Calu3 (cell line): ENCODE measurements at regions of chr9 and their contacts with region 1.

Region 1: GRCh38 chr9:129482521-129483414 is 138.1 kb downstream of the C9orf50 start:
- DNase-seq: peak; percentile 78
- H3K4me3 Mint-ChIP-seq: peak overlapping the region; percentile 57
- H3K27ac Mint-ChIP-seq: peak overlapping the region; percentile 98
- H3K4me1 Mint-ChIP-seq: peaks cover 62% of the 10 kb centered on the region
- H3K27me3 Mint-ChIP-seq: no peaks in the 10 kb centered on the region
- CTCF ChIP-seq: no peak

Region 2: GRCh38 chr9:129413537-129414376 is 69.0 kb before region 1 on chr9:
- CTCF ChIA-PET with region 1: interaction called, 4 read pairs
- intact Hi-C with region 1: loop called (anchors 10 kb)
- DNase-seq: peak; percentile 98
- H3K4me3 Mint-ChIP-seq: peak overlapping the region; percentile 55
- H3K27ac Mint-ChIP-seq: peak overlapping the region; percentile 92
- H3K4me1 Mint-ChIP-seq: peaks cover 22% of the 10 kb centered on the region
- H3K27me3 Mint-ChIP-seq: no peaks in the 10 kb centered on the region
- CTCF ChIP-seq: no peak

Region 3: GRCh38 chr9:129495534-129496325 is 13.0 kb after region 1 on chr9:
- CTCF ChIA-PET with region 1: interaction called, 11 read pairs
- intact Hi-C with region 1: no loop called
- DNase-seq: peak; percentile 92
- H3K4me3 Mint-ChIP-seq: peak overlapping the region; percentile 73
- H3K27ac Mint-ChIP-seq: peak overlapping the region; percentile 79
- H3K4me1 Mint-ChIP-seq: peaks cover 54% of the 10 kb centered on the region
- H3K27me3 Mint-ChIP-seq: no peaks in the 10 kb centered on the region
- CTCF ChIP-seq: no peak